ENCODE measurements at regions of chr11 and their contacts with region 1.

Region 1: GRCh38 chr11:74581954-74582547 is 10.3 kb upstream of the POLD3 start:
- DNase-seq: no peak
- ATAC-seq: no peak
- H3K4me3 Mint-ChIP-seq: no peak overlapping the region
- H3K27ac Mint-ChIP-seq: no peak overlapping the region
- H3K4me1 Mint-ChIP-seq: no peaks in the 10 kb centered on the region
- H3K27me3 Mint-ChIP-seq: peaks cover 2% of the 10 kb centered on the region

Region 2: GRCh38 chr11:74520927-74521665 is 61.0 kb before region 1 on chr11:
- CTCF ChIA-PET with region 1: no interaction called
- POLR2A ChIA-PET with region 1: no interaction called
- DNase-seq: no peak
- ATAC-seq: no peak
- H3K4me3 Mint-ChIP-seq: no peak overlapping the region
- H3K27ac Mint-ChIP-seq: no peak overlapping the region
- H3K4me1 Mint-ChIP-seq: no peaks in the 10 kb centered on the region
- H3K27me3 Mint-ChIP-seq: peaks cover 25% of the 10 kb centered on the region

Region 3: DNA sequence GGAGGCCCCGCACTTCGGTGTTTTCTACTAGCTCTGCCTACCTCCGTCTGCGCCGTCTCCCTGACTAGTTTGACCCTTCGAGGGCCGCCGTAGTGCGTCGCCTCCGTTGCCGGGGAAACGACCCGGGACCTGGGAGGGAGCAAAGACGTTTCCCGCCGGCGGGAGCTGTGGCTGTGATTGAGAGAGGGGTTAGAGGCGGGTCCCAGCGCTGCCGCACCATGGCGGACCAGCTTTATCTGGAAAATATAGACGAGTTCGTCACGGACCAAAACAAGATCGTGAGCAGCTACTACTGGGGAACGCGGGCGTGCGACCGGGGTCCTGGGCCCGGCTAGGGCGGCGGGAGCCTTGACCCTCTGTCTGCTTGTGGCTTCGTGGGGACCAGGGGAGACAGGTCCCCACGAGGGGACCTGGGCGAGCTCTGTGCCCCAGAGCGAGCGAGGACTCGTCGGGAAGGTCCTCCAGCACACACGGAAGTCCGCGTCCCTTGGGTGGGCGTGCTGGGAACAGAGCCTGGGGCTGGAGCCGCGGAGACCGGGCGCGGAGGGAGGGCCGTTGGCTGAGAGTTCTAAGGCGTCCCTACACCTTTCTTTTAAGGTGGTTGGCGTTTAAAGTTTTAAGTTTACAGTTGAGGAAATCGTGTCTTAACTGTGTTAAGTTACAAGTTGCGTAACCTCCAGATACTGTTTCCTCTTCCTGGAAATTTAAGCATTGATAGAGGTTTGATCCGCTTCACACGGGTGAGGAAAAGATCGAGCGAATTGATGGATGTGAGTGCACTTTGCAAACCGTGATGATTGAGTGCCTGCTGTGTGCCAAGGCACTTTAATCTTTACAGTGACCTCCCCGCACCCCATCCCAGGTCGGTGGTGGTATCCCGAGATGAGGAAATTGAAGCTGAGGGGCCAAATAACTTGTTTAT is 10.7 kb after region 1 on chr11 and contains the start of gene POLD3:
- CTCF ChIA-PET with region 1: no interaction called
- POLR2A ChIA-PET with region 1: interaction called, 10 read pairs
- DNase-seq: peak; percentile 96
- ATAC-seq: peak; percentile 98
- H3K4me3 Mint-ChIP-seq: peak within 1 kb of the TSS; percentile 98
- H3K27ac Mint-ChIP-seq: peak within 1 kb of the TSS; percentile 92
- H3K4me1 Mint-ChIP-seq: peaks cover 36% of the 10 kb centered on the region
- H3K27me3 Mint-ChIP-seq: peaks cover 6% of the 10 kb centered on the region
- total RNA-seq, gene POLD3: 45.4 to 50.4 TPM